Activated T-helper 2 cell treated with anti-CD3 and anti-CD28 coated beads, Interferon-gamma antibody, Interleukin-2, Interleukin-4, amounts not matched to agents 10 μg/mL and 5 μg/mL and 100 μg/mL, durations not matched to agents 14 hours and 24 hours and 36 hours (primary cell): ENCODE measurements at regions of chr16 and their contacts with region 1.

Region 1: GRCh38 chr16:4271176-4272066 is 1.4 kb downstream of the TFAP4 start:
- DNase-seq: peak; percentile 87
- H3K4me3 Mint-ChIP-seq: peak overlapping the region; percentile 83
- H3K27ac Mint-ChIP-seq: peak overlapping the region; percentile 90
- H3K4me1 Mint-ChIP-seq: peaks cover 6% of the 10 kb centered on the region
- H3K27me3 Mint-ChIP-seq: no peaks in the 10 kb centered on the region

Region 2: DNA sequence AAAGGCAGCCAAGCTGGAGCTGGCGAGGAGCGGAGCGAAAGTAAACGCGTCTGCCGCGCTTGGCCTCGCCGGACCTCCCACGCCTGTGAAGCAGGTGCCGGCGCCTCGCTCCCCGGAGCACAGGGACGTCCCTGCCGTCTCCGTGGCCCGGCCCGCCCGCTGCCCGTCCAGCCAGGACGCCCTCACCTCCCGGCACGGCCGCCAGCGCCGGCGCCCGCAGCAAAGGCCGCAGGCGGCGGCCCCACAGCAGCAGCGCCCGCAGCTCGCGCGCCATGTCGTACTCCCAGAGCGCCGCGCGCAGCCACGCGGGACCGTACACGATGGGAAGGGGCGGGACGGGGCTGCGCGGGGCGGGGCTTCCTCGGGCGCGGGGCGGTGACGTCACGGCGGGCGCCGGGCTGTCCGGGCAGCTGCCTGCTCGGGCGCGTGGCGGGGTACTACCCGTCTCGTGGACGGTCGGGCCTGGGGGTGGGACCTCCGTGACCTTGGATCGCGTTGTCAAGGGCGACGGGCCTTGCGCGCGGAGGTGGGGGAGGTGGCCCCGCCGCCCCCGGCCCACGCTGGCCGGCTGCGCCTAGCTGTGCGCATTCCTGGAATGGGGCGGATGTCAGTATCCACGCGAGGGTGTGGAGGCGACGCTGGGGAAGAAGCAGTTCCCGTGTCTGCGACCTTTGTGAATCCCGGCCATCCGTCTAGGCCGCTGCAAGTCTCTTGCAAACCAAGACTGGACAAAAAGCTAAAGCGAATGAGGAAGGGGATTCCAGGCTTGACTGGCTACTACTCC is 554.0 kb before region 1 on chr16 and contains the start of gene TRAP1:
- intact Hi-C with region 1: loop called (anchors 10 kb)
- DNase-seq: peak; percentile 84
- H3K4me3 Mint-ChIP-seq: peak within 1 kb of the TSS; percentile 83
- H3K27ac Mint-ChIP-seq: peak within 1 kb of the TSS; percentile 89
- H3K4me1 Mint-ChIP-seq: peaks cover 32% of the 10 kb centered on the region
- H3K27me3 Mint-ChIP-seq: no peaks in the 10 kb centered on the region
- total RNA-seq, gene TRAP1: 299 and 307 TPM in 2 replicates

Region 3: GRCh38 chr16:4307215-4308037 is 36.0 kb after region 1 on chr16:
- intact Hi-C with region 1: loop called (anchors 1 kb)
- DNase-seq: peak; percentile 96
- H3K4me3 Mint-ChIP-seq: peak overlapping the region; percentile 99
- H3K27ac Mint-ChIP-seq: peak overlapping the region; percentile 97
- H3K4me1 Mint-ChIP-seq: peaks cover 18% of the 10 kb centered on the region
- H3K27me3 Mint-ChIP-seq: no peaks in the 10 kb centered on the region

Region 4: GRCh38 chr16:4330277-4330874 is 59.0 kb after region 1 on chr16:
- intact Hi-C with region 1: no loop called
- DNase-seq: peak; percentile 47
- H3K4me3 Mint-ChIP-seq: no peak overlapping the region
- H3K27ac Mint-ChIP-seq: no peak overlapping the region
- H3K4me1 Mint-ChIP-seq: peaks cover 3% of the 10 kb centered on the region
- H3K27me3 Mint-ChIP-seq: peaks cover 5% of the 10 kb centered on the region

Region 5: GRCh38 chr16:4350787-4351659 is 79.6 kb after region 1 on chr16 and contains the start of gene PAM16:
- intact Hi-C with region 1: loop called (anchors 1 kb)
- DNase-seq: peak; percentile 98
- H3K4me3 Mint-ChIP-seq: peak within 1 kb of the TSS; percentile 93
- H3K27ac Mint-ChIP-seq: peak within 1 kb of the TSS; percentile 88
- H3K4me1 Mint-ChIP-seq: peaks cover 4% of the 10 kb centered on the region
- H3K27me3 Mint-ChIP-seq: no peaks in the 10 kb centered on the region
- total RNA-seq, gene PAM16: 73.1 and 73.8 TPM in 2 replicates

Region 6: GRCh38 chr16:4475880-4476788 is 204.7 kb after region 1 on chr16 and contains the start of gene HMOX2:
- intact Hi-C with region 1: no loop called
- DNase-seq: peak; percentile 94
- H3K4me3 Mint-ChIP-seq: peak within 1 kb of the TSS; percentile 80
- H3K27ac Mint-ChIP-seq: peak within 1 kb of the TSS; percentile 84
- H3K4me1 Mint-ChIP-seq: peaks cover 19% of the 10 kb centered on the region
- H3K27me3 Mint-ChIP-seq: no peaks in the 10 kb centered on the region
- total RNA-seq, gene HMOX2: 70.2 and 75.2 TPM in 2 replicates